ENCODE measurements at regions of chr12 and their contacts with region 1.

Region 1: DNA sequence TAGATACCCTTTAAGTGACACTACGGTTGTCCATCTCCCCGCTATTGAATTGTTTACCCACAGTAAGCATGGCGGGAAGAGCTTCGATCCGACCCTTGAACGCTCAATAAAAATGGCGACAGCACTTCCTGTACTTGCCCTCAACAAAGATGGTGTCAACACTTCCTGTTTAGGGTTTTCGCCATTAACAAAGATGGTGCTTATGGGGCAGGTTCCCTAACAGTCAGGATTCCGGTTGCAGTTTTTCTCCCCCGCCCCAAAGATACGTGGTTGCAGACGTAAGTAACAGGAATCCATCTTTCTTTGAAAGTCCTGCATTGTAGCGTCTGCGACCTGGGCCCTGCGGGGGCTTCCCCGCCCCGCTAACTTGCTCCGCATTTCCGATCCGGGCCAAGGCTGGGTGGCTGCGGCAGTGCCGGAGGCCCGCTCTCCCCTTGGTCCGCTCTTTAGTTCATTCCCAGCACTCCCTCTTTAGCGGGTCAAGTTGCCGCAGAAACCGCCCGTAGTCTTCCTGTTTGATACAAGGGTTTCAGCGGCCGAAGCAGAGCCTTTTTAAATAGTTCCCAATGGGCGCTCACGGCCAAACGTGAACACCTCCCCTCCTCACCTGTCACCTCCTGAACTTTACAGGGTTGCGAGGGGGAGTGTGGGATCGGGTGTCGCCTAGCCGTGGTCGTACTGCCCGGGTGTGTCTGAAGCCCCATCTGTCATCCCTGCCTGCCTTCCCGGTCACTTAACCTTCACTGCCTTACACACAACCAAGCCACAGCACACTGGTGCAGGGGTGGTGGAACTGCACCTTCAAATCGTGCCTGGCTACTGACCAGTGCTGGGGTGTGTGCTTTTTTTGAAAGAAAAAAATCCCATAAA is at the start of gene CRADD:
- DNase-seq: peak; percentile 67 to 93
- ATAC-seq: peak; percentile 91 to 97 (median 94)
- H3K4me3 ChIP-seq: peak within 1 kb of the TSS; percentile 48 to 80 (median 66)
- H3K27ac ChIP-seq: peak within 1 kb of the TSS; percentile 86 to 99 (median 98)
- H3K4me1 ChIP-seq: peaks cover 0 to 51% (median 27%) of the 10 kb centered on the region in 9 donors
- H3K27me3 ChIP-seq: no peaks in the 10 kb centered on the region
- CTCF ChIP-seq: no peak
- total RNA-seq, gene CRADD: 36.3 to 80.1 (median 60.2) TPM

Region 2: GRCh38 chr12:93591137-93591868 is 86.1 kb before region 1 on chr12:
- intact Hi-C with region 1: loop called in 6 of 10 experiments (anchors 5 kb)
- DNase-seq: peak; percentile 81 to 86
- ATAC-seq: peak; percentile 93 to 98 (median 94)
- H3K4me3 ChIP-seq: peak overlapping the region; percentile 22 to 67 (median 60)
- H3K27ac ChIP-seq: peak overlapping the region; percentile 71 to 95 (median 88)
- H3K4me1 ChIP-seq: peaks cover 0 to 45% (median 36%) of the 10 kb centered on the region in 9 donors
- H3K27me3 ChIP-seq: peaks cover 0 to 35% (median 0%) of the 10 kb centered on the region in 7 donors
- CTCF ChIP-seq: no peak

Region 3: DNA sequence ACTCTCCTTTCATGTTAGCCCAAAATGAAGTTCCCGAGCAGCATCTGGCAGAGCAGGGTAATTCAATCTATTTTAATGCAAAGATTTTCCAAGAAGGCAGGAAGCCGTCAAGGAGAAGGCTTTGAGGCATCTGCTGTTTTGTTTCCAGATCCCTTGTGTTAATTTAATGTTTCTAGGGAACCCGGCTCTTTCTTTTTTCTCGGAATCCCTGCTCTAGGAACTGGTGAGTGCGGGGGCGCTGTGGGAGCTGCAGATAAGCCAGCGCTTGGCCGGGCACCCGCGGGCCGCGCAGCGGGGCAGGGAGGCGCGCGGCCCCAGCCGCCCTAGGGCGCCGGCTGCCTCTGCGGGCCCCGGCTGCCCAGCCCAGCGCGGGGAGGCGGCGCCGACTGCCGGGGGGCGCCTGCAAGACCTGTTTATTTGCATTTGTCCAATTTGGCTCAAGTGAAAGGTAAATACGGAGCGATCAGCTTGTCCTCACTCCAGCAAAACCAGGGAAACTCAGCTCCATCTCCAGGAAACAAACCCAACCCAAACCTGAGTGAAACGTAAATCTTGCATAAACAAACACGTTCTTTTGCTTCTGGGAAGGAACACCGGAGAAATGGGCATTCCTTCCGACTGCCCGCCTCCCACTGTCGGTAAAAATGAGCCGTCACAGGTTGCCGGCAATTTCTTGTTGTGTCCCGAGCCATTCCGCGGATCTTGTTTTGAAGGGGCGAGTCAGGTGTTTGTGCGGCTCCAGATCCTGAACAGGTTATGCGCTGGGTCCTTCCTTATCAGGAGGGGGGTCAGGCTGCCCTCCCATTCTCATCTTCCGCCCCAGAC is 64.9 kb after region 1 on chr12:
- intact Hi-C with region 1: loop called in 7 of 10 experiments (anchors 2 to 5 kb)
- DNase-seq: peak; percentile 75 to 80
- ATAC-seq: peak; percentile 88 to 96 (median 90)
- H3K4me3 ChIP-seq: peak overlapping the region; percentile 16 to 68 (median 64)
- H3K27ac ChIP-seq: peak overlapping the region; percentile 86 to 95 (median 91)
- H3K4me1 ChIP-seq: peaks cover 5 to 88% (median 74%) of the 10 kb centered on the region in 9 donors
- H3K27me3 ChIP-seq: no peaks in the 10 kb centered on the region
- CTCF ChIP-seq: peak in 8 of 9 donors; percentile 11 to 57 (median 44)

Region 4: GRCh38 chr12:93813972-93814821 is 136.8 kb after region 1 on chr12:
- intact Hi-C with region 1: loop called in 2 of 10 experiments (anchors 5 to 10 kb)
- DNase-seq: peak; percentile 74 to 86
- ATAC-seq: peak; percentile 80 to 94 (median 90)
- H3K4me3 ChIP-seq: peak overlapping the region in 7 of 10 donors; percentile 1 to 29 (median 18)
- H3K27ac ChIP-seq: peak overlapping the region; percentile 80 to 96 (median 90)
- H3K4me1 ChIP-seq: peaks cover 25 to 73% (median 62%) of the 10 kb centered on the region in 9 donors
- H3K27me3 ChIP-seq: no peaks in the 10 kb centered on the region
- CTCF ChIP-seq: peak in 3 of 9 donors; percentile 11 to 26 (median 12)

Region 5: GRCh38 chr12:93857279-93857938 is 180.0 kb after region 1 on chr12:
- intact Hi-C with region 1: no loop called
- DNase-seq: no peak
- ATAC-seq: peak; percentile 24 to 64 (median 35)
- H3K4me3 ChIP-seq: no peak overlapping the region
- H3K27ac ChIP-seq: peak overlapping the region in 4 of 10 donors; percentile 5 to 61 (median 37)
- H3K4me1 ChIP-seq: peaks cover 2 to 35% (median 24%) of the 10 kb centered on the region in 9 donors
- H3K27me3 ChIP-seq: no peaks in the 10 kb centered on the region
- CTCF ChIP-seq: no peak

Region 6: GRCh38 chr12:93990832-93991803 is 313.7 kb after region 1 on chr12:
- intact Hi-C with region 1: loop called in 1 of 10 experiments (anchors 10 kb)
- DNase-seq: peak; percentile 41 to 68
- ATAC-seq: peak; percentile 60 to 97 (median 94)
- H3K4me3 ChIP-seq: peak overlapping the region in 6 of 10 donors; percentile 22 to 33 (median 28)
- H3K27ac ChIP-seq: peak overlapping the region in 9 of 10 donors; percentile 27 to 72 (median 51)
- H3K4me1 ChIP-seq: peaks cover 0 to 23% (median 12%) of the 10 kb centered on the region in 9 donors
- H3K27me3 ChIP-seq: no peaks in the 10 kb centered on the region
- CTCF ChIP-seq: peak; percentile 19 to 74 (median 49)

Region 7: GRCh38 chr12:94101738-94102660 is 424.6 kb after region 1 on chr12:
- intact Hi-C with region 1: loop called in 5 of 10 experiments (anchors 5 kb)
- DNase-seq: peak; percentile 78 to 88
- ATAC-seq: peak; percentile 83 to 94 (median 90)
- H3K4me3 ChIP-seq: peak overlapping the region; percentile 16 to 90 (median 66)
- H3K27ac ChIP-seq: peak overlapping the region in 8 of 10 donors; percentile 2 to 80 (median 68)
- H3K4me1 ChIP-seq: peaks cover 0 to 26% (median 12%) of the 10 kb centered on the region in 9 donors
- H3K27me3 ChIP-seq: peaks cover 0 to 21% (median 0%) of the 10 kb centered on the region in 7 donors
- CTCF ChIP-seq: peak; percentile 61 to 94 (median 86)